ENCODE measurements at regions of chr11 and their contacts with region 1.

Region 1: DNA sequence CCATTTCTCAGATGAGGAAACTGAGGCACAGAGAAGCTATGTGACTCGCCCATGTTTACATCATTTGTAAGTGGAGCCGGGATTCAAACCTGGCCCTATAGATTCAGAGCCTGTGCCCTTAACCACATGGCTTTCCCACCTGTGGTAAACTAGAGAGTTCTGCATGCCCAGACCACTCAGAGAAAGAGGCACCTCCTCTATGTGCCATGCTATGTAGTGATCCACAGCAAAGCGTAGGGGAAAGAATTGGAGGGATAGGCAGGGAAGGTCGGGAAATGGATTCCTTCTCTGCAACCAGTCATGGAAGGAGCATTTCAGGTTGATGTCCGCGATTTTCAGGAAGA is 15.4 kb upstream of the POU2AF2 start:
- DNase-seq: no peak
- CTCF ChIP-seq: no peak

Region 2: GRCh38 chr11:110200241-110200640 is 1029.9 kb before region 1 on chr11:
- in situ Hi-C with region 1: loop called (anchors 25 kb)
- DNase-seq: no peak
- CTCF ChIP-seq: no peak

Region 3: GRCh38 chr11:110453684-110454354 is 776.3 kb before region 1 on chr11:
- in situ Hi-C with region 1: loop called (anchors 10 kb)
- DNase-seq: peak; percentile 35
- CTCF ChIP-seq: no peak

Region 4: GRCh38 chr11:111299101-111300026 is 69.3 kb after region 1 on chr11:
- in situ Hi-C with region 1: no loop called
- DNase-seq: peak; percentile 77
- CTCF ChIP-seq: peak; percentile 35

Measured in GM13976 (cell line).